ENCODE measurements at regions of chr12 and their contacts with region 1.

Region 1: DNA sequence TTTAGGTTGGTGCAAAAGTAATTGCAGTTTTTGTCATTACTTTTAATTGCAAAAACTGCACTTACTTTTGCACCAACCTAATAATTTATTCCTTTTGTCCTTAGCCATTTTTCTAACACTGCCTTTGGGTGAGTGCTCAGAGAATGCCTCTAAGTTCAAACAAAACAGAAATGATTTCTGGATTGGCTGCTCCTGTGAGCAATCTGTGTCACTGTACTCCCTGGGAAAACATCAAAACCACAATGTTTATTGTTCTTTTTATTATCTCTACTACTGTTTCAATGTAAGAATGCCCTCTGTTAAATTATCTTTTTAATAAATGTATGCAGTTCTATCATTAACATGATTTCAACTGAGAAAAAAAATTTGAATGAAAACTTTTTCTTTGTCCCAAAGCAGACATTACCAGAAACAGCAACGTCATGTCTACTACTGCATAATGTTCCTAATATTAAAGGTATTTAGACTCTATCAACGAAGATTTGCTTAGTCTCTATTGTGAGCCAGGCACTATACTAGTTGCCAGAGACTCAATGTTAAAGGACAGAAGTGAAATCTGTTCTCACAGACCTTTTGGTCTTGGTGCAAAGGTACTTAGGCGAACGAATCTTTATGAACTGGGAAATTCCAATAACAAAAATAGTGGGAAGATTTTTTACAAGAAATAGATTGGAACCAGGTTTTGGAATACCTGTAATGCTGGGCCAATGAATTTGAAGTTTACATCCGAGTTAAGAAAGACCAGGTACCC is 6.2 kb downstream of the SLC41A2 start:
- DNase-seq: no peak
- H3K4me3 ChIP-seq: no peak overlapping the region
- H3K27ac ChIP-seq: no peak overlapping the region
- H3K4me1 ChIP-seq: no peaks in the 10 kb centered on the region
- H3K27me3 ChIP-seq: peaks cover 59% of the 10 kb centered on the region
- CTCF ChIP-seq: no peak

Region 2: DNA sequence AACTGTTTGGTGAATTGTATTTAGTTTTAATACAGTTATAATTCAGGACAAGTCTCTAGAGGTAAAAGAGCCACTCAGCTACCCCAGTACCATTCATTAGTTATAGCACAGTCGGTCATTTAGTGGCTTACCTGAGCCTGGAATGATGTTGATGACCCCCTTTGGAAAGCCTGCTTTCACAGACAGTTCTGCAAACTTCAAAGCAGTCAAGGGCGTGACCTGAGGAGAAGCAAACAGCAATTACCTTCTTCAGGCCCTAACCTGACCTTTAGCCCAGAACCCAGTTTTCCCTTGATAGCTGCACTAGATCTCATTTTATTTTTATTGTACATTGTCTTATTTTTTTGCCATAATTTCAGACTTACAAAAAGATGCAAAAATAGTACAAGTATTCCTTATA is 88.5 kb after region 1 on chr12:
- CTCF ChIA-PET with region 1: no interaction called
- POLR2A ChIA-PET with region 1: interaction called, 14 read pairs
- intact Hi-C with region 1: no loop called
- DNase-seq: no peak
- H3K4me3 ChIP-seq: no peak overlapping the region
- H3K27ac ChIP-seq: no peak overlapping the region
- H3K4me1 ChIP-seq: no peaks in the 10 kb centered on the region
- H3K27me3 ChIP-seq: no peaks in the 10 kb centered on the region
- CTCF ChIP-seq: no peak

Measured in A673 (cell line).